Psoas muscle (tissue), 8 donors: ENCODE measurements at regions of chr6 and their contacts with region 1.

Region 1: GRCh38 chr6:28281288-28282064 is at the start of gene PGBD1:
- DNase-seq: peak; percentile 82 to 86
- ATAC-seq: peak; percentile 87 to 98 (median 94)
- H3K4me3 ChIP-seq: peak within 1 kb of the TSS; percentile 76
- H3K27ac ChIP-seq: peak within 1 kb of the TSS; percentile 33
- H3K4me1 ChIP-seq: no peaks in the 10 kb centered on the region
- H3K27me3 ChIP-seq: no peaks in the 10 kb centered on the region
- CTCF ChIP-seq: no peak
- total RNA-seq, gene PGBD1: 0.93 to 2.6 (median 1.3) TPM

Region 2: GRCh38 chr6:28335564-28336283 is 54.2 kb after region 1 on chr6 and contains the start of gene ZSCAN31:
- intact Hi-C with region 1: loop called in 1 of 2 experiments (anchors 5 kb)
- DNase-seq: peak; percentile 91 to 95
- ATAC-seq: peak; percentile 96 to 98 (median 98)
- H3K4me3 ChIP-seq: peak within 1 kb of the TSS; percentile 90
- H3K27ac ChIP-seq: peak within 1 kb of the TSS; percentile 96
- H3K4me1 ChIP-seq: peaks cover 8% of the 10 kb centered on the region
- H3K27me3 ChIP-seq: no peaks in the 10 kb centered on the region
- CTCF ChIP-seq: no peak
- total RNA-seq, gene ZSCAN31: 4.8 to 10.8 (median 7.7) TPM

Region 3: GRCh38 chr6:28776269-28777146 is 495.0 kb after region 1 on chr6:
- intact Hi-C with region 1: no loop called
- DNase-seq: no peak
- ATAC-seq: no peak
- H3K4me3 ChIP-seq: no peak overlapping the region
- H3K27ac ChIP-seq: no peak overlapping the region
- H3K4me1 ChIP-seq: no peaks in the 10 kb centered on the region
- H3K27me3 ChIP-seq: peaks cover 17 to 99% (median 36%) of the 10 kb centered on the region in 3 donors
- CTCF ChIP-seq: no peak